ENCODE measurements at regions of chr9 and their contacts with region 1.

Region 1: GRCh38 chr9:124771021-124771866 is at the start of gene NR6A1:
- DNase-seq: peak; percentile 95 to 98 (median 97)
- ATAC-seq: peak; percentile 94 to 97 (median 95)
- H3K4me3 ChIP-seq: peak within 1 kb of the TSS; percentile 68 to 96 (median 90)
- H3K27ac ChIP-seq: peak within 1 kb of the TSS in 11 of 12 donors; percentile 50 to 82 (median 70)
- H3K4me1 ChIP-seq: peaks cover 0 to 52% (median 18%) of the 10 kb centered on the region in 12 donors
- H3K27me3 ChIP-seq: peaks cover 0 to 30% (median 10%) of the 10 kb centered on the region in 9 donors
- CTCF ChIP-seq: peak in 11 of 12 donors; percentile 9 to 63 (median 35)
- POLR2A ChIP-seq: peak; percentile 9 to 41
- total RNA-seq, gene NR6A1: 1.1 to 5.7 (median 1.6) TPM

Region 2: GRCh38 chr9:124420991-124421543 is 350.2 kb before region 1 on chr9:
- intact Hi-C with region 1: no loop called
- DNase-seq: peak in 1 of 5 donors; percentile 38
- ATAC-seq: peak in 2 of 4 donors; percentile 11 to 23
- H3K4me3 ChIP-seq: no peak overlapping the region
- H3K27ac ChIP-seq: no peak overlapping the region
- H3K4me1 ChIP-seq: peaks cover 0 to 6% (median 0%) of the 10 kb centered on the region in 12 donors
- H3K27me3 ChIP-seq: no peaks in the 10 kb centered on the region
- CTCF ChIP-seq: no peak
- POLR2A ChIP-seq: no peak

Region 3: GRCh38 chr9:124852829-124853531 is 81.7 kb after region 1 on chr9 and contains the start of gene WDR38:
- intact Hi-C with region 1: loop called (anchors 1 kb)
- DNase-seq: peak; percentile 79 to 90 (median 86)
- ATAC-seq: peak; percentile 89 to 92 (median 91)
- H3K4me3 ChIP-seq: peak within 1 kb of the TSS in 11 of 12 donors; percentile 17 to 60 (median 49)
- H3K27ac ChIP-seq: peak within 1 kb of the TSS; percentile 42 to 95 (median 86)
- H3K4me1 ChIP-seq: peaks cover 0 to 41% (median 20%) of the 10 kb centered on the region in 12 donors
- H3K27me3 ChIP-seq: no peaks in the 10 kb centered on the region
- CTCF ChIP-seq: peak; percentile 96 to 100 (median 98)
- POLR2A ChIP-seq: peak in 1 of 2 donors; percentile 23
- total RNA-seq, gene WDR38: not detected

Region 4: GRCh38 chr9:124861342-124862229 is 90.3 kb after region 1 on chr9 and contains the starts of genes ARPC5L and RPL35:
- intact Hi-C with region 1: loop called in 1 of 10 experiments (anchors 2 kb)
- DNase-seq: peak; percentile 96 to 98 (median 96)
- ATAC-seq: peak; percentile 95 to 97 (median 96)
- H3K4me3 ChIP-seq: peak within 1 kb of the TSS; percentile 71 to 98 (median 84)
- H3K27ac ChIP-seq: peak within 1 kb of the TSS; percentile 81 to 95 (median 92)
- H3K4me1 ChIP-seq: peaks cover 0 to 42% (median 32%) of the 10 kb centered on the region in 12 donors
- H3K27me3 ChIP-seq: no peaks in the 10 kb centered on the region
- CTCF ChIP-seq: peak in 7 of 12 donors; percentile 10 to 45 (median 23)
- POLR2A ChIP-seq: peak in 1 of 2 donors; percentile 93
- total RNA-seq, gene ARPC5L: 27.0 to 56.7 (median 38.3) TPM
- total RNA-seq, gene RPL35: 600 to 1,072 (median 736) TPM

Region 5: GRCh38 chr9:124894741-124895170 is 123.5 kb after region 1 on chr9:
- intact Hi-C with region 1: loop called in 2 of 10 experiments (anchors 1 kb)
- DNase-seq: no peak
- ATAC-seq: peak in 2 of 4 donors; percentile 36 to 60
- H3K4me3 ChIP-seq: no peak overlapping the region
- H3K27ac ChIP-seq: no peak overlapping the region
- H3K4me1 ChIP-seq: no peaks in the 10 kb centered on the region
- H3K27me3 ChIP-seq: no peaks in the 10 kb centered on the region
- CTCF ChIP-seq: peak in 9 of 12 donors; percentile 5 to 49 (median 43)
- POLR2A ChIP-seq: no peak

Region 6: GRCh38 chr9:124940693-124941453 is 169.6 kb after region 1 on chr9 and contains the start of gene GOLGA1:
- intact Hi-C with region 1: loop called in 2 of 10 experiments (anchors 1 to 5 kb)
- DNase-seq: peak; percentile 95 to 98 (median 97)
- ATAC-seq: peak; percentile 97 to 99 (median 98)
- H3K4me3 ChIP-seq: peak within 1 kb of the TSS; percentile 60 to 99 (median 86)
- H3K27ac ChIP-seq: peak within 1 kb of the TSS; percentile 87 to 99 (median 96)
- H3K4me1 ChIP-seq: peaks cover 0 to 19% (median 15%) of the 10 kb centered on the region in 12 donors
- H3K27me3 ChIP-seq: no peaks in the 10 kb centered on the region
- CTCF ChIP-seq: peak in 1 of 12 donors; percentile 16
- POLR2A ChIP-seq: peak in 1 of 2 donors; percentile 86
- total RNA-seq, gene GOLGA1: 13.9 to 22.9 (median 19.4) TPM

Region 7: DNA sequence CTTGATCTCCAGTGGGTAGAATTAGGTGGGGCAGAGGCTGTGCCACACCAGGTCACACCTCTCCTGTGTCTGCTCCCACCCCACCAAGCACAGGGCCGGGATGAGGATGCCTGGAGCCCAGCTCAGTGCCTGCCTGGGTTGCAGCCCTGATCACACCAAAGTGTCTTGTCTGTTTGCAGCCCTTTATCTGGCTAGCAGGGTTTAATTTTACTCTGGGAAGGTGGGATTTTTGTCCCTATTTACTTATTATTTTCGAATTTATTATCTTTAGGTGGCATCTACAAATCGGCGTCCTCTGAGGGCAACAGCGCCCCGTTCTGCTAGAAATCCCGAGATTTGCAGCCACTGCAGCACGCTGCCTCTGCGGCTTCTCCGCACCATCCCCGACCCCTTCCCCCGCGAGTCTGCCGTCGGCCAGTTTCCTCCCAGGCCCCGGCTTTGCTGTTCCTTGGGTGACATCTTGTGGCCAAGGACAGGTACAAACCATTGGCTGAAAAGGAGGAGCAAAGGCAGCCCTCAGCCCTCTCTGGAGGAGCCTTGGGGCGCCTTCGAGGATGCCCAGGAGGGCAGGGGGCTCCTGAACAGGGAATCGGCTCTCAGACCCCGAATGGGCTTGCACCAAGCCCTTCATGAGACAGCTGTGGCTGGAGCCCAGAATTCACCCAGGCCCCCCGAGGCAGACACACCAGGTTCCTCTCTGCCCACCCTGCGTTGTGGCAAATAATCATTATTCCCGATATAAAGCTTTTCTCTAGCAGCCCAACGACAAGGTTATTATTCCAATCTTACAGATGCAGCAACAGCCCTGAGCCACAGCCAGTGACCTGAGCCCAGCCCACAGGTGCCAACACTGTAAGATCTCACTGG is 603.4 kb after region 1 on chr9:
- intact Hi-C with region 1: loop called in 8 of 10 experiments (anchors 5 to 10 kb)
- DNase-seq: peak; percentile 55 to 76 (median 66)
- ATAC-seq: peak; percentile 70 to 87 (median 84)
- H3K4me3 ChIP-seq: peak overlapping the region in 9 of 12 donors; percentile 26 to 50 (median 42)
- H3K27ac ChIP-seq: no peak overlapping the region
- H3K4me1 ChIP-seq: peaks cover 0 to 8% (median 2%) of the 10 kb centered on the region in 12 donors
- H3K27me3 ChIP-seq: peaks cover 0 to 4% (median 0%) of the 10 kb centered on the region in 9 donors
- CTCF ChIP-seq: peak; percentile 57 to 81 (median 70)
- POLR2A ChIP-seq: no peak

Measured in heart left ventricle (tissue), 16 donors.